SK-N-SH (cell line): ENCODE measurements at regions of chr2 and their contacts with region 1.

Region 1: GRCh38 chr2:2328848-2329247 is 2.2 kb downstream of the MYT1L start:
- DNase-seq: no peak
- H3K4me3 ChIP-seq: peak overlapping the region in 1 of 2 experiments; percentile 37; a peak in 2 of 4 replicates
- H3K27ac ChIP-seq: peak overlapping the region in 1 of 2 experiments; percentile 100; a peak in 2 of 4 replicates
- H3K4me1 ChIP-seq: peaks cover 0 to 27% of the 10 kb centered on the region in 2 experiments; a peak in 2 of 4 replicates
- H3K27me3 ChIP-seq: no peaks in the 10 kb centered on the region
- CTCF ChIP-seq: no peak
- EP300 ChIP-seq: no peak; a peak in 1 of 4 replicates
- RAD21 ChIP-seq: no peak

Region 2: GRCh38 chr2:1940679-1941078 is 388.2 kb before region 1 on chr2:
- CTCF ChIA-PET with region 1: no interaction called
- POLR2A ChIA-PET with region 1: no interaction called
- DNase-seq: peak; percentile 87
- H3K4me3 ChIP-seq: no peak overlapping the region
- H3K27ac ChIP-seq: peak overlapping the region in 1 of 2 experiments; percentile 11; a peak in 2 of 4 replicates
- H3K4me1 ChIP-seq: peaks cover 0 to 14% of the 10 kb centered on the region in 2 experiments; a peak in 2 of 4 replicates
- H3K27me3 ChIP-seq: no peaks in the 10 kb centered on the region
- CTCF ChIP-seq: no peak
- EP300 ChIP-seq: no peak
- RAD21 ChIP-seq: peak; percentile 53

Region 3: DNA sequence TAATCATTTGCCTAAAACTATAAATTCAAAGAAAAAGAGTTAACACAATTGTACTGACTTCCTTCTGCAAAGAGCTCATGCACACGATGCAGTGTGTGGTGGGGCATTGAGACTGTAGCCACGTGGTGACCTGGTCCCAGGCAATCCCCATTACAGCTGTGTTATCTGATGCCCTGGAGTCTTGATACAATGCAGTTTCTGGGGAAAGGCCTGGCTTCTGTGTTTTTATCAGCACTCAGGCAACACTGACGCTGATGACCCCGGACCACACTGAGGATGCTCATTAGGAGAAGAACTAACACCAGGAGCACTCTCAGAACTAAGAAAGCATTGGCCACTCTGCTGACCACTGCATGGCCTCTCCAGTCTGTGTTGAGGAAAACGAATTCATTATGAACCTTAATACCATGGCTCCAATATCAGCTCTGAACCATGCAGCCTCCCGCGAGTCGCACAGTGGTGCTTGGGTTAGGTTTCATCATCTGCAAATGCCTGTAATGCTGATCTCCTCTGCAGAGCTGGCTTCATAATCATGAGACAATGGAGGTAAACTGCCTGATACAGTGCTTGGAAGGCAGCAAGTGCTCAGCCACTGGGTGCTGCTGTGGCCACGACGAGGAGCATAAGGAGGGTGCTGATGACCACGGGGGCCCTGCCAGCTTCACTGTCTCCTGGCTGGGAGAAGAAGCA is 216.3 kb before region 1 on chr2:
- CTCF ChIA-PET with region 1: interaction called, 8 read pairs
- POLR2A ChIA-PET with region 1: interaction called, 11 read pairs
- DNase-seq: peak; percentile 95
- H3K4me3 ChIP-seq: no peak overlapping the region; a peak in 1 of 4 replicates
- H3K27ac ChIP-seq: peak overlapping the region in 1 of 2 experiments; percentile 100; a peak in 3 of 4 replicates
- H3K4me1 ChIP-seq: peaks cover 0 to 90% of the 10 kb centered on the region in 2 experiments; a peak in 2 of 4 replicates
- H3K27me3 ChIP-seq: no peaks in the 10 kb centered on the region
- CTCF ChIP-seq: no peak
- EP300 ChIP-seq: peak in 1 of 2 experiments; percentile 99; a peak in 2 of 4 replicates
- RAD21 ChIP-seq: peak; percentile 53

Region 4: GRCh38 chr2:2188941-2189340 is 139.9 kb before region 1 on chr2:
- CTCF ChIA-PET with region 1: interaction called, 4 read pairs
- POLR2A ChIA-PET with region 1: interaction called, 13 read pairs
- DNase-seq: no peak
- H3K4me3 ChIP-seq: no peak overlapping the region
- H3K27ac ChIP-seq: peak overlapping the region in 1 of 2 experiments; percentile 100; a peak in 2 of 4 replicates
- H3K4me1 ChIP-seq: peaks cover 0 to 70% of the 10 kb centered on the region in 2 experiments; a peak in 2 of 4 replicates
- H3K27me3 ChIP-seq: no peaks in the 10 kb centered on the region
- CTCF ChIP-seq: no peak
- EP300 ChIP-seq: no peak
- RAD21 ChIP-seq: no peak

Region 5: DNA sequence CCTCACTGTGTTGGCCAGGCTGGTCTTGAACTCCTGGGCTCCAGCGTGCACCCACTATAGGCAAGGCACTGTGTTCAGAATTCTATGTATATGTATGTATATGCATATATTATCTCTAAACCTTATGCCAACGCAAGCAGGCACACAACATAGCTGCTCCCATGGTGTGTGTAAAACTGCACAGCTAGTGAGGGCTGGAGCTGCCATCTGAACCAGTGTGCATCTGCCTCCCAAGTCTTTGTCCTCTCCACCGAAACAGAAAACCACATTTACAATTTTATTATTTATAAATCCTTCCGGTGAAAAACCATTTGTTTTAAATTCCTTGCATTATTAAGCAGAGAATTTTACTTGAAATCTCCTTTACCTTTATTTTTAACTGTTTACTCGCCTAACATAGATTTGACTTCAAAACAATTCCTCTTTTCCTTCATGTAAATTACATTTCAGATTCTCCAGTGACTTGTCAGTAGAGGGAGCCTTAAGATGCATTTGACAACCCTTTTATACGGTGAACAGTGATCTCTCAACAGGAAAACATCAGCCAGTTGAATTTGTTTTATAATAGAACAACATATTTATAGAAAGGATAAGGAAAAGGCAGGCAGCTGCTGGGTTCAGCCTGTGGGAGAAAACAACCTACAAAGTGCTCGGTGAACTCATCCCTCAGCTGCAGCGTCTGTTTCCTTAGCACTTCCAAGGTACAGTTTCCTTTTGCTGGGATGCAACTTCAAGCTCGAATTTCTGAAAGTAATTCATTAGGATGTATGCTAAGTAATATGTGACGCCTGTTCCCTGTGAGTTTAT is 99.0 kb before region 1 on chr2:
- CTCF ChIA-PET with region 1: interaction called, 10 read pairs
- POLR2A ChIA-PET with region 1: interaction called, 4 read pairs
- DNase-seq: peak; percentile 44
- H3K4me3 ChIP-seq: no peak overlapping the region
- H3K27ac ChIP-seq: peak overlapping the region in 1 of 2 experiments; percentile 50; a peak in 2 of 4 replicates
- H3K4me1 ChIP-seq: peaks cover 0 to 13% of the 10 kb centered on the region in 2 experiments; a peak in 2 of 4 replicates
- H3K27me3 ChIP-seq: no peaks in the 10 kb centered on the region
- CTCF ChIP-seq: peak; percentile 40
- EP300 ChIP-seq: no peak
- RAD21 ChIP-seq: peak; percentile 74

Region 6: GRCh38 chr2:2271469-2271941 is 57.3 kb before region 1 on chr2:
- CTCF ChIA-PET with region 1: interaction called, 4 read pairs
- POLR2A ChIA-PET with region 1: interaction called, 12 read pairs
- DNase-seq: peak; percentile 82
- H3K4me3 ChIP-seq: no peak overlapping the region
- H3K27ac ChIP-seq: peak overlapping the region; percentile 71 to 95
- H3K4me1 ChIP-seq: peaks cover 12 to 42% of the 10 kb centered on the region in 2 experiments; a peak in 3 of 4 replicates
- H3K27me3 ChIP-seq: no peaks in the 10 kb centered on the region
- CTCF ChIP-seq: no peak
- EP300 ChIP-seq: peak in 1 of 2 experiments; percentile 52; a peak in 1 of 4 replicates
- RAD21 ChIP-seq: peak; percentile 56